Activated B cell treated with CpG ODN at 0.5 μM for 24 hours (primary cell): ENCODE measurements at regions of chr5 and their contacts with region 1.

Region 1: DNA sequence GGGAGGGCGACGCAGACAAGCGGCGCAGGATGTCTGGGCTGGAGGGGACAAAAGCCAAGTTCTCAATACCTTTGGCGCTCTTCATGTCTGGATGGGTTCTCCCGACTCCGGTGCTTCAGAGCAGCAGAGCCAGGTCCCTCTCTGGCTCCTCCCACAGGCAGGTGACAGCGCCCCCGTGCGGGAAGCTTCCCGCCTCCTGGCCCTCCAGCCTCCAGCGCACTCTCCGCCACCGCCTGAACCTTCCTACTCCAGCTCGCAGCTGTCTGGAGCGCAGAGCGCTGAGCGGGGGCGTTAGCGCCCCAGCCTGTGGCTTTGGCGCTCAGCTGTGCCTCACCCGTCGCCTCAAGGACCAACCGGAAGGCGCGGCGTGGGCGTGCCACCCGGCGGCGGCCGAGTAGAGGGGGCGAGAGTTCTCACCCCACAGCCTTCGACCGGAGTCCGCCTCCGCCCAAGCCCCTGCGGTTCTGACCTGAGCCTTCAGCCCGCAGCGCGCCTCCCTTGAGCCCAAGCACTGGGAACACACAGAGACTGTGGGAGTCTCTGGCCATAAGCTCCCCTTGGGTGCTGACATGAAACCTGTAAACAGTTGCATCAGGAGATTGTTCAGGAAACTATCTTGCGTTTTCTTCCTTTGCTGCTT is at the start of gene SLCO4C1:
- DNase-seq: peak; percentile 62
- ATAC-seq: peak; percentile 85
- H3K4me3 Mint-ChIP-seq: peak within 1 kb of the TSS; percentile 87
- H3K27ac Mint-ChIP-seq: peak within 1 kb of the TSS; percentile 12
- H3K4me1 Mint-ChIP-seq: peaks cover 25% of the 10 kb centered on the region
- H3K27me3 Mint-ChIP-seq: no peaks in the 10 kb centered on the region
- CTCF ChIP-seq: no peak
- total RNA-seq, gene SLCO4C1: 0.24 and 0.33 TPM in 2 replicates

Region 2: DNA sequence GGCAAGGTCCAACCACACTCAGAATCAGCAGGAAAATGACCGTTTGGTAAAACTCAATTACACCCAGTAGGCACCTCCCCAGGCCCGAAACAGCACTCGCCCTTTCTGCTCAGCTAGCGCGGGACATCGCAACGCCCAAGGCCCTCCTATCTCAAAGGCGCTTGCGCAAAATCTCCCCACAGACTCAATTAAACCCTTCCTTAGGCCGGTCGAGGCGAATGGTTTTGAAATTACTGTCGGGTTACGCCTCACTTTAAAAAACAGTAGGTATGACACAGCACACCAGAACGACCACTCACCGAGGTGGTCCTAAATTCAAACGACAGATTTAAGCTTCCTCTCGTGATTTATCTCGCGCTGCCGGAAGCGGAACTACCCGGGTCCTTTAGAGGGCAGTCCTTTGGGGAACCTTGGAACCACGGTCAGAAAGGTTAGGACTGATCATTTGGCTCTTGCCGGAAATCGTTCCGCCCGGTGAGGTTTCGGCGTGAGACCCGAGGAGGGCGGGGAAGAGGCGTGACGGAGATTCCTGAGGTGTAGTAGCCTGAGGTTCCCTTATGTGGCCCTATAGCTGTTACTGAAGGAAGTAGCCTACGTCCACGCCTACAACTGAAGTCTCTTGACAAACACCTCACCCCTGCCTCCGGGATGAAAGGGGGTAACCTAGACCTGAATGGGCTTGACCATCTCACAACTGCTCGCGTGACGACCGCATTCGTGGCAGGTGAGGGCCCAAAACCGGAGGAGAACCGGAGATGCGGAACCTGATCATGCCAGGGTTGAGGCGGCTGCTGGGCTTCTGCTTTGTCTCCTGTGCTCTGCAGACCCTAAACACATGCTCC is 823.7 kb after region 1 on chr5 and contains the starts of genes GIN1 and PPIP5K2:
- CTCF ChIA-PET with region 1: no interaction called
- POLR2A ChIA-PET with region 1: no interaction called
- intact Hi-C with region 1: loop called (anchors 10 kb)
- DNase-seq: peak; percentile 96
- ATAC-seq: peak; percentile 87
- H3K4me3 Mint-ChIP-seq: peak within 1 kb of the TSS; percentile 98
- H3K27ac Mint-ChIP-seq: peak within 1 kb of the TSS; percentile 99
- H3K4me1 Mint-ChIP-seq: peaks cover 35% of the 10 kb centered on the region
- H3K27me3 Mint-ChIP-seq: no peaks in the 10 kb centered on the region
- CTCF ChIP-seq: no peak
- total RNA-seq, gene GIN1: 9.1 and 12.6 TPM in 2 replicates
- total RNA-seq, gene PPIP5K2: 60.7 and 76.1 TPM in 2 replicates